Left ventricle myocardium superior (tissue), 1 donor: ENCODE measurements at regions of chr3 and their contacts with region 1.

Region 1: DNA sequence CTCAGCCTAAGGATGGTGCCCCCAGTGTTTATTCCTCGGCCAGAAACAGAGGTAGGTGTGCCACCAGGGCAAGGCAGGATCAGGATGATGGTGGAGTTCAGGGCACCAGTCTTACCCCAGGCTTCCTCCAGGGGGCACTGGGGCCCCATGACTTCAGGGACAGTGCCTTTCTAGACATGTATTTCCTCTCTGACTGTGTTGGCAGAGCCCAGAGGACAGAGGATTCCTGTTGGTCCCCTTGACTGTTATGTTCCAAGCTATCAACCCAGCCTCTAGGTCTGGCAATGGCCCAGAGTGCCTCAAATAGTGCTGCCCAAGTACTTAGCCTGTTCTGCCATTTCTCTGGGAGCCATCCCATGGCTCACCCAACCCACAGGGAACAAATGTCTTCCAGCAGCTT is 2.8 kb downstream of the HEMK1 start:
- DNase-seq: peak; percentile 84
- ATAC-seq: peak; percentile 35

Region 2: DNA sequence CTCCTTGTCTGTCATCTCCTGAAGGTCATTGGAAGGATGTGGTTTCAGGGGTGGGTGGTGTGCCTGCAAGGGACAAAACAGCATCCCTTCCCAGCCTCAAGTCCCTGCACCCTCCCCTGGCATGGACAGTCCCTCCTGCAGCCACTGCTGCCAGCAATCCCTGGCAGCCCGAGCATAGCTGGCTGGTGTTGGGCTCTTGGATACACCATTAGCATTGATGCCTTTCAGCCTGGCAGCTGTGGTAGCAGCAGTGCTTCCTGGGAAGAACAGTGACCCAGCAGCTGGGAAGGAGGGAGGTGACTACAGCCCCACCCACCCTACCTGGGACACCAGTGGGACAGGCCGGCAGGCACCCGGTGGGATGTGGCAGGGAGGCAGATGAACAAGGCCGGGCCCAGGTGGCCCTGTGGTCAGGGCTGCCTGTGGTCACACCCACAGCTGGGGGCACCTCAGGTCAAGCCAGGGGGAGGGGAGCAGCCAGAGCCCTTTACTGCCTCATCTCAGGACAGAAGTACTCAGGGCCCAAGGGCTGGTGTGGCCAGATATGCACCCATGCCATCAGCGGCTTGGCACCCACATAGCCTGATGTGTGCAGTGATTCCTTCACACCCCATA is 179.9 kb before region 1 on chr3:
- intact Hi-C with region 1: no loop called
- DNase-seq: peak; percentile 73
- ATAC-seq: peak; percentile 89

Region 3: GRCh38 chr3:50611464-50612233 is 39.5 kb after region 1 on chr3 and contains the start of gene CISH:
- intact Hi-C with region 1: loop called (anchors 1 kb)
- DNase-seq: peak; percentile 97
- ATAC-seq: peak; percentile 80
- total RNA-seq, gene CISH: 10.2 TPM